ENCODE measurements at regions of chr16 and their contacts with region 1.

Region 1: GRCh38 chr16:10918294-10919002 is 23.8 kb downstream of the DEXI start:
- DNase-seq: peak; percentile 59
- H3K4me3 ChIP-seq: no peak overlapping the region
- CTCF ChIP-seq: peak; percentile 95

Region 2: DNA sequence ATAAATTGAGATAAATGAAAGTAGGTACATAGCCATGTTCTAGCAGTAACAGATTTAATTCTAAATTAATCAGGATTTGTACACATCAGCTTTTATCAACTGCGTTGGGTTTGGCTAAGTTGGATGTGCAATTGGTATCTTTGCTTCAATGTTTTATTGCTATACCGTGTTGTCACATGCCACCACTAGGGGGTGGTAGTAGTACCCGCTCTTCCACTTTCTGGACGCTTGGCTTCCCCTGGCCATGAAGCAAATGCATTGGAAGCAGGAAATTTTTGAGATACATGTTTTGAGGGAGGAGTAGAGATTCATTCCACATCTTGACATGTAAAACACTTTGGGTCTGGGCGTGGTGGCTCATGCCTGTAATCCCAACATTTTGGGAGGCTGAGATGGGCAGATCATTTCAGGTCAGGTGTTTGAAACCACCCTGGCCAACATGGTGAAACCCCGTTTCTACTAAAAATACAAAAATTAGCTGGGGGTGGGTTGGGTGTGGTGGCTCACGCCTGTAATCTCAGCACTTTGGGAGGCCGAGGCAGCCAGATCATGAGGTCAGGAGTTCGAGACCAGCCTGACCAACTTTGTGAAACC is 396.7 kb before region 1 on chr16:
- CTCF ChIA-PET with region 1: interaction called, 22 read pairs
- POLR2A ChIA-PET with region 1: no interaction called
- DNase-seq: no peak
- H3K4me3 ChIP-seq: no peak overlapping the region
- CTCF ChIP-seq: peak; percentile 61

Region 3: GRCh38 chr16:10743610-10744393 is 174.6 kb before region 1 on chr16 and contains the start of gene NUBP1:
- CTCF ChIA-PET with region 1: interaction called, 25 read pairs
- POLR2A ChIA-PET with region 1: no interaction called
- DNase-seq: peak; percentile 89
- H3K4me3 ChIP-seq: peak within 1 kb of the TSS; percentile 82
- CTCF ChIP-seq: no peak

Region 4: GRCh38 chr16:10888320-10888937 is 30.0 kb before region 1 on chr16:
- CTCF ChIA-PET with region 1: interaction called, 10 read pairs
- POLR2A ChIA-PET with region 1: no interaction called
- DNase-seq: no peak
- H3K4me3 ChIP-seq: no peak overlapping the region
- CTCF ChIP-seq: no peak

Region 5: GRCh38 chr16:10944249-10945064 is 26.0 kb after region 1 on chr16 and contains the start of gene CLEC16A:
- CTCF ChIA-PET with region 1: interaction called, 108 read pairs
- POLR2A ChIA-PET with region 1: no interaction called
- DNase-seq: peak; percentile 70
- H3K4me3 ChIP-seq: peak within 1 kb of the TSS; percentile 86
- CTCF ChIP-seq: no peak